ENCODE measurements at regions of chr7 and their contacts with region 1.

Region 1: GRCh38 chr7:44999245-45000095 is 531 bp upstream of the CCM2 start:
- DNase-seq: peak; percentile 97 to 99 (median 99)
- ATAC-seq: peak; percentile 81
- H3K4me3 ChIP-seq: peak overlapping the region; percentile 59 to 75
- H3K4me3 Mint-ChIP-seq: peak overlapping the region; percentile 99
- H3K27ac ChIP-seq: peak overlapping the region; percentile 70
- H3K27ac Mint-ChIP-seq: peak overlapping the region; percentile 98
- H3K4me1 ChIP-seq: peaks cover 36% of the 10 kb centered on the region
- H3K4me1 Mint-ChIP-seq: peaks cover 51% of the 10 kb centered on the region
- H3K27me3 ChIP-seq: no peaks in the 10 kb centered on the region
- H3K27me3 Mint-ChIP-seq: no peaks in the 10 kb centered on the region
- CTCF ChIP-seq: no peak

Region 2: DNA sequence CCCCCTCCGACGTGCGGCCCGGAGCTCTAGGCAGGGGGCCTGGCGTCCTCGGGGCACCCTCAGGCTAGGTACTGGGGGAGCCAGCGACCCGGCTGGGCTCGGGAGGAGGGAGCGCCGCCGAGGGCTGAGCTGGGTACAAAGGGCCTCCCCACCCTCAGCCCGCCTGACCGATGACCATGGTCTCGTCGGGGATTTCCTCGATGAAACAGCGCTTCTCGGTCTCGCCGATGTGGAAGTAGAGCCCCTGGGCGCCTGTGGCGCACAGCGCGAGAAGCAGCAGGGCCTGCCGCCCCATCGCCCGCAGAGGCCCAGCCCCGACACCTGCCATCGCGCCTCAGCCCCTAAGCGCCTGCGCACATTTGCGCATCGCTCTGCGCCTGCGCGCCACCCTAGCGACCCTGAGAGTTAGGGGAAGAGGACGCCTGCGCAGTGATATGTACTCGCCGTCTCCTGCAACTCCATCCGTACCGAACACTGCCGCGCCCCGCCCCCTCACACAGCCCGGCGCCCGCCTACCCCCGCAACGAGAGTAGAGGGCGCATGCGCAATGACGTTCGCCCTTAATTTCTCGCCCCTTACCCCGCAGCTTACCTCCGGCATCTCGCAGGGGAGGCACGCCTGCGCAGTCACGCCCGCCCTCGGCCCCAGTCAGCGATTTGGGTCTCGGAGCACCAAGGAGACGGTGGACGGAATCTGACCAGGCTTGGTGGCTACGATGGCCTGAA is 417.4 kb before region 1 on chr7 and contains the start of gene TMED4:
- CTCF ChIA-PET with region 1: interaction called, 3 read pairs
- POLR2A ChIA-PET with region 1: no interaction called
- intact Hi-C with region 1: loop called in 1 of 2 experiments (anchors 1 kb)
- DNase-seq: peak; percentile 100
- ATAC-seq: peak; percentile 93
- H3K4me3 ChIP-seq: peak within 1 kb of the TSS; percentile 76 to 79
- H3K4me3 Mint-ChIP-seq: peak within 1 kb of the TSS; percentile 93
- H3K27ac ChIP-seq: peak within 1 kb of the TSS; percentile 92 to 96
- H3K27ac Mint-ChIP-seq: peak within 1 kb of the TSS; percentile 98
- H3K4me1 ChIP-seq: peaks cover 26% of the 10 kb centered on the region
- H3K4me1 Mint-ChIP-seq: peaks cover 33% of the 10 kb centered on the region
- H3K27me3 ChIP-seq: no peaks in the 10 kb centered on the region
- H3K27me3 Mint-ChIP-seq: no peaks in the 10 kb centered on the region
- CTCF ChIP-seq: no peak
- total RNA-seq, gene TMED4: 115 to 120 TPM

Region 3: DNA sequence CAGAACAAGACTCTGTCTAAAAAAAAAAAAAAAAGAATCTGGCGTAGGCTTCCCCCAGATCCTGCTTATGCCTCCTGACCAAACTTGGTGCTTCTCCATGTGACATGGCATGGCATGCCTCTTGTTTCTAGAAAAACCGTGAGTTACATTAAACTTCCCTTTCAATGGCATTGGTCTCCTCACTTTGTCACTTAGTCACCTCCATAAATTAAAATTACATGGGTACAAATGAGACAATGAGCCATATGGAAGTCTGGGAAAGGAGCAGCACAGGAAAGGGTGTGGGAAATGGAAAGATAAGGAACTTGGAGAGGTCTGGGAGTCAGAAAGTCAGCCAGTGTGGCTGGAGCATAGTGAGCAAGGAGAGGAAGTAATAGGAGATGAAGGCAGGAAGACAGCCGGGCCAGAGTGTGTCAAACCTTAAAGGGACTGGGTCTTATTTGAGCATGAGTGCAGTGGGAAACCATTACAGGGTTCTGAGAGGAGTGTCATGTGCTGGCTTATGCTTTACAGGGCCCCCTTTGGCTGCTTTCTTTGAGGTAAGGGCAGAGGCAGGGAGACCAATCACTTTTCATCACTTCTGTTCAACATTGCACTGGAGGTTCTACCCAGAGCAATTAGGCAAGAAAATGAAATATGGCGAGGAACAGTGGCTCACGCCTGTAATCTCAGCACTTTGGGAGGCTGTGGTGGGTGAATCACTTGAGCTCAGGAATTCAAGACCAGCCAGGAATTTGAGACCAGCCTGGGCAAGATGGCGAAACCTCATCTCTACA is 272.1 kb before region 1 on chr7:
- CTCF ChIA-PET with region 1: no interaction called
- POLR2A ChIA-PET with region 1: no interaction called
- intact Hi-C with region 1: no loop called
- DNase-seq: no peak
- ATAC-seq: no peak
- H3K4me3 ChIP-seq: no peak overlapping the region
- H3K4me3 Mint-ChIP-seq: no peak overlapping the region
- H3K27ac ChIP-seq: no peak overlapping the region
- H3K27ac Mint-ChIP-seq: no peak overlapping the region
- H3K4me1 ChIP-seq: no peaks in the 10 kb centered on the region
- H3K4me1 Mint-ChIP-seq: no peaks in the 10 kb centered on the region
- H3K27me3 ChIP-seq: no peaks in the 10 kb centered on the region
- H3K27me3 Mint-ChIP-seq: peaks cover 4% of the 10 kb centered on the region
- CTCF ChIP-seq: no peak

Region 4: GRCh38 chr7:44962483-44963251 is 36.8 kb before region 1 on chr7:
- CTCF ChIA-PET with region 1: no interaction called
- POLR2A ChIA-PET with region 1: no interaction called
- intact Hi-C with region 1: loop called in 1 of 2 experiments (anchors 5 kb)
- DNase-seq: peak in 3 of 9 experiments; percentile 23 to 44 (median 42)
- ATAC-seq: no peak
- H3K4me3 ChIP-seq: no peak overlapping the region
- H3K4me3 Mint-ChIP-seq: no peak overlapping the region
- H3K27ac ChIP-seq: no peak overlapping the region
- H3K27ac Mint-ChIP-seq: no peak overlapping the region
- H3K4me1 ChIP-seq: peaks cover 3% of the 10 kb centered on the region
- H3K4me1 Mint-ChIP-seq: peaks cover 17% of the 10 kb centered on the region
- H3K27me3 ChIP-seq: no peaks in the 10 kb centered on the region
- H3K27me3 Mint-ChIP-seq: no peaks in the 10 kb centered on the region
- CTCF ChIP-seq: no peak

Region 5: DNA sequence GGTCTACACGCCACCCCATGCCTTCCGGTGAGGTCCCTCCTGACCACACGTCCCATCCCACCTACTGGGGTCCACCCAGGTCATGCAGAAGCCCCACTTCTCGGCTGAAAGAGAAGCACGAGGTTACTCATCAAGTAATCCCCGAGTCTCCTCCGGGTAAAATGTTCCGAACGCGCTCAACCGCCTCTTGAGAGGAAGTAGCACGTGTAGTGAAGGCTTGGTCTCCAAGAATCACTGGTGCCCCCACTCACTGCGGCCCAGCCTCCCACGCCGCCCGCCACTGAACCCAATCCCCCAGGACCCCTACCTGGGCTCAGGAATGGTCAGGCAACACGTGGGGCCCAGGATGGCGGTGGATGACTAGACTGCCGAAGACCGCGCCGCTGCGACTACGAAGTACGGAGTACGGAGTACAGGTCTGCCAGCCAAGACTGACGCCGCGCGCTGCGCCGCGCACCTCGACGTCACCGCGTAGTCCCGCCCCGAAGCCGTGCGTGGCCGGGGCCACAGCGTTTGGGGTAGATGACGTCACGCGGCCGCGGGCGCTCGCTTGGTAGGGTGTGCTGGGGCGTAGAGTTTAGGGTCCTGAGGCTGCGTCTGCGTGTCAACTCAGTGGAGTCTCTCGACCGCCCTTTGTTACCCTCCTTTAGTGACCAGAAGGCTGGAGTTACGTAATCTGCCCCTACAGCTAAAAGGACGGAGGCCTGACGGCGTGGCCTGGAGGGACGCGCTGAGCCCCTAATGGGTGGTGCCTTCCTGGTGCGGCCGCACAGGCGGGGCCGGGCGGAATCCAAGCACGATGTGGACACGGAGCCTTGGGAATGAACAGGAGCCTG is 13.0 kb before region 1 on chr7:
- CTCF ChIA-PET with region 1: interaction called, 4 read pairs
- POLR2A ChIA-PET with region 1: interaction called, 8 read pairs
- intact Hi-C with region 1: loop called (anchors 1 kb)
- DNase-seq: peak; percentile 86 to 98 (median 96)
- ATAC-seq: peak; percentile 93
- H3K4me3 ChIP-seq: peak overlapping the region; percentile 84 to 92
- H3K4me3 Mint-ChIP-seq: peak overlapping the region; percentile 96
- H3K27ac ChIP-seq: peak overlapping the region; percentile 93 to 99
- H3K27ac Mint-ChIP-seq: peak overlapping the region; percentile 98
- H3K4me1 ChIP-seq: peaks cover 37% of the 10 kb centered on the region
- H3K4me1 Mint-ChIP-seq: peaks cover 52% of the 10 kb centered on the region
- H3K27me3 ChIP-seq: no peaks in the 10 kb centered on the region
- H3K27me3 Mint-ChIP-seq: no peaks in the 10 kb centered on the region
- CTCF ChIP-seq: no peak

Region 6: GRCh38 chr7:45033261-45033930 is 33.9 kb after region 1 on chr7:
- CTCF ChIA-PET with region 1: interaction called, 25 read pairs
- POLR2A ChIA-PET with region 1: interaction called, 111 read pairs
- intact Hi-C with region 1: no loop called
- DNase-seq: peak in 3 of 9 experiments; percentile 20 to 53 (median 34)
- ATAC-seq: peak; percentile 34
- H3K4me3 ChIP-seq: peak overlapping the region in 1 of 2 experiments; percentile 18
- H3K4me3 Mint-ChIP-seq: peak overlapping the region; percentile 75
- H3K27ac ChIP-seq: peak overlapping the region; percentile 11 to 51
- H3K27ac Mint-ChIP-seq: peak overlapping the region; percentile 91
- H3K4me1 ChIP-seq: peaks cover 77% of the 10 kb centered on the region
- H3K4me1 Mint-ChIP-seq: peaks cover 80% of the 10 kb centered on the region
- H3K27me3 ChIP-seq: no peaks in the 10 kb centered on the region
- H3K27me3 Mint-ChIP-seq: no peaks in the 10 kb centered on the region
- CTCF ChIP-seq: no peak

Measured in CD8-positive, alpha-beta T cell (primary cell).